Transverse colon (tissue), 4 donors: ENCODE measurements at regions of chr10 and their contacts with region 1.

Region 1: DNA sequence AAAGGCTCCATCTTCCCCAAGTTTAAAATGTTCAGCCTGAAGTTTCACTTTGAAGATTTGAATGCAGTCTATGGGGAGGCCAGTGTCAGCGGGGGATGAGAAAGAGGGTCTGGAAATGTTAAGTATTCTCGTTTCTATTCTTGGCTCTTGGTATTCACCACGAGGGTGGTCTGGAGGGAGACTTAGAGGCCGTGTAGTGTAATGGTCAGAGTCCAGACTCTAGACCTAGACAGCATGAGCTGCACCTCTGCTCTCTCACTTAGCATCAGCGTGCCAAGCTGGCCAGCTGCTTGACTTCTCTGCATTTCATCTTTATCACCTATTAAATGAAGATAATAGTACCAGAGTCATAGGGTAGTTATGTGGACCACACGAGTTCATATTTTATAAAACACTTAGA is 57.9 kb downstream of the MKX start:
- DNase-seq: no peak
- H3K4me3 ChIP-seq: no peak overlapping the region
- H3K27ac ChIP-seq: no peak overlapping the region
- H3K4me1 ChIP-seq: peaks cover 0 to 4% (median 0%) of the 10 kb centered on the region in 4 donors
- H3K27me3 ChIP-seq: no peaks in the 10 kb centered on the region
- CTCF ChIP-seq: no peak
- EP300 ChIP-seq: no peak
- POLR2A ChIP-seq: no peak

Region 2: GRCh38 chr10:26987851-26988337 is 699.8 kb before region 1 on chr10:
- in situ Hi-C with region 1: no loop called
- intact Hi-C with region 1: no loop called
- DNase-seq: no peak
- H3K4me3 ChIP-seq: no peak overlapping the region
- H3K27ac ChIP-seq: no peak overlapping the region
- H3K4me1 ChIP-seq: no peaks in the 10 kb centered on the region
- H3K27me3 ChIP-seq: no peaks in the 10 kb centered on the region
- CTCF ChIP-seq: no peak
- EP300 ChIP-seq: no peak
- POLR2A ChIP-seq: no peak

Region 3: DNA sequence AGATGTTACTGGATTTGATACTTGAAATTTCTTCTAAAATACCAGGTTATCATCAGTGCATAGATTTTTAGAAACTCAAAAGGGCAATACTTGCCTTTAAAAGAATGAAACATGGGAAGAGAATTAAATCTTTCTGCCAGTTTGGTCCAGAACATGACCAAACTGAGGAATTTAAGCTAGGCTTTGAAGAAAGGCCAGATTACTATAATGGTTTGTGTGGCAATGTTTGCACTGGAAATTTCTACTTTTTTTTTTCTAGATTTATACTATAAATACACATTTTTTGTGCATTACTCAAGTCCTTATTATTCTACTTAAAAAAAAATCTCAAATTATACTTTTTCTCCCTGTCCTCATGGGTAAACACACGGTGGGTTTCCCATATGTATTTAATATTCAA is 48.7 kb after region 1 on chr10:
- in situ Hi-C with region 1: no loop called
- intact Hi-C with region 1: loop called (anchors 2 kb)
- DNase-seq: no peak
- H3K4me3 ChIP-seq: no peak overlapping the region
- H3K27ac ChIP-seq: no peak overlapping the region
- H3K4me1 ChIP-seq: peaks cover 0 to 4% (median 3%) of the 10 kb centered on the region in 4 donors
- H3K27me3 ChIP-seq: peaks cover 38% of the 10 kb centered on the region
- CTCF ChIP-seq: no peak
- EP300 ChIP-seq: no peak
- POLR2A ChIP-seq: no peak

Region 4: GRCh38 chr10:27944005-27944404 is 256.3 kb after region 1 on chr10:
- in situ Hi-C with region 1: no loop called
- intact Hi-C with region 1: no loop called
- DNase-seq: no peak
- H3K4me3 ChIP-seq: no peak overlapping the region
- H3K27ac ChIP-seq: no peak overlapping the region
- H3K4me1 ChIP-seq: no peaks in the 10 kb centered on the region
- H3K27me3 ChIP-seq: no peaks in the 10 kb centered on the region
- CTCF ChIP-seq: no peak
- EP300 ChIP-seq: no peak
- POLR2A ChIP-seq: no peak